A673 (cell line): ENCODE measurements at regions of chr12 and their contacts with region 1.

Region 1: DNA sequence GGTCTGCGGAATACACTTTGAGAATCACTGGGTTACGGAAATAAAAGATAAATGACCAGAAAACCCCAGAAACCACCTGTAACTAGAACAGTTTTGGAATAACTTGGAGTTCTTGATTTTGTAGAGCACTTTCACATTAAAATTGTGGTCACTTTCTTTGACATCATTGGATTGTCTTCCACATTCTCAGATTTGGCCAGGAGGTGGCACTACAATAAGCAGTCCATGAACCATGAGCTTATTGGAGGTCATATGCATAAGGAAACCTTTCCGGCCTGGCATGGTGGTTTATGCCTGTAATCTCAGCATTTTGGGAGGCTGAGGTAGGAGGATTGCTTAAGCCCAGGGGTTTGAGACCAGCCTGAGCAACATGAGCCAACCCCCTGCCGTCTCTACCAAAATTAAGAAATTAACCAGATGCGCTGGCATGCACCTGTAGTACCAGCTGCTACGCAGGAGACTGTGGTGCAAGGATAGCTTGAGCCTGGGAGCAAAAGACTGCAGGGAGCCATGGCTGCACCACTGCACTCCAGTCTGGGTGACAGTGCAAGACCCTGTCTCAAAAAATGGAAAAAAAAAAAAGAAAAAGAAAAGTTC is 107.7 kb upstream of the CAND1 start:
- DNase-seq: peak; percentile 62
- H3K4me3 ChIP-seq: no peak overlapping the region
- H3K27ac ChIP-seq: no peak overlapping the region
- H3K4me1 ChIP-seq: no peaks in the 10 kb centered on the region
- H3K27me3 ChIP-seq: peaks cover 19% of the 10 kb centered on the region
- CTCF ChIP-seq: peak; percentile 70

Region 2: DNA sequence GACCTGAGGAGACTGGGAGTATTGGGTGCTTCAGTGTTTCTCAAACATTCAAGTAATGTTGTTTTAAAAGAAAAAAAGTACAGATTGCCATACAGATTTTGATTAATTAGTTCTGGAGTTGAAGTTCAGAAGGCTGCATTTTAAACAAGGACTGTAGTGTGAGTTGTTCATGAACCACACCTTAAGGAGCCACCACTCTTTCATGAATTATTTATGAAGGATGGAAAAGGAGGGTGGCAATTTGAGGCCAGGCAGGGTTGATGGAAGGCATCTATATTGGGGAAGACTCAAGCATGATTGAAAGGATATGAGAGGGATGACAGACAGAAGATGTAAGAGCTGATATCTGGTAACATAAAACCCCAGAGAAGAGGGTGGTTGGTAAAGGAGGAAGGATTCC is 38.8 kb before region 1 on chr12:
- CTCF ChIA-PET with region 1: interaction called, 11 read pairs
- POLR2A ChIA-PET with region 1: no interaction called
- intact Hi-C with region 1: no loop called
- DNase-seq: no peak
- H3K4me3 ChIP-seq: no peak overlapping the region
- H3K27ac ChIP-seq: no peak overlapping the region
- H3K4me1 ChIP-seq: no peaks in the 10 kb centered on the region
- H3K27me3 ChIP-seq: peaks cover 13% of the 10 kb centered on the region
- CTCF ChIP-seq: no peak